Activated T-helper 1 cell treated with anti-CD3 and anti-CD28 coated beads, Interleukin-12 subunit alpha, Interleukin-12 subunit beta, Interleukin-2, Interleukin-4 antibody, amounts not matched to agents 30 ng/mL and 10 ng/mL and 1 ng/mL, durations not matched to agents 14 hours and 24 hours and 36 hours (primary cell): ENCODE measurements at regions of chr10 and their contacts with region 1.

Region 1: GRCh38 chr10:102904346-102904745 is 13.7 kb upstream of the CNNM2 start:
- DNase-seq: no peak
- H3K4me3 Mint-ChIP-seq: no peak overlapping the region
- H3K27ac Mint-ChIP-seq: no peak overlapping the region
- H3K4me1 Mint-ChIP-seq: no peaks in the 10 kb centered on the region
- H3K27me3 Mint-ChIP-seq: peaks cover 2% of the 10 kb centered on the region

Region 2: DNA sequence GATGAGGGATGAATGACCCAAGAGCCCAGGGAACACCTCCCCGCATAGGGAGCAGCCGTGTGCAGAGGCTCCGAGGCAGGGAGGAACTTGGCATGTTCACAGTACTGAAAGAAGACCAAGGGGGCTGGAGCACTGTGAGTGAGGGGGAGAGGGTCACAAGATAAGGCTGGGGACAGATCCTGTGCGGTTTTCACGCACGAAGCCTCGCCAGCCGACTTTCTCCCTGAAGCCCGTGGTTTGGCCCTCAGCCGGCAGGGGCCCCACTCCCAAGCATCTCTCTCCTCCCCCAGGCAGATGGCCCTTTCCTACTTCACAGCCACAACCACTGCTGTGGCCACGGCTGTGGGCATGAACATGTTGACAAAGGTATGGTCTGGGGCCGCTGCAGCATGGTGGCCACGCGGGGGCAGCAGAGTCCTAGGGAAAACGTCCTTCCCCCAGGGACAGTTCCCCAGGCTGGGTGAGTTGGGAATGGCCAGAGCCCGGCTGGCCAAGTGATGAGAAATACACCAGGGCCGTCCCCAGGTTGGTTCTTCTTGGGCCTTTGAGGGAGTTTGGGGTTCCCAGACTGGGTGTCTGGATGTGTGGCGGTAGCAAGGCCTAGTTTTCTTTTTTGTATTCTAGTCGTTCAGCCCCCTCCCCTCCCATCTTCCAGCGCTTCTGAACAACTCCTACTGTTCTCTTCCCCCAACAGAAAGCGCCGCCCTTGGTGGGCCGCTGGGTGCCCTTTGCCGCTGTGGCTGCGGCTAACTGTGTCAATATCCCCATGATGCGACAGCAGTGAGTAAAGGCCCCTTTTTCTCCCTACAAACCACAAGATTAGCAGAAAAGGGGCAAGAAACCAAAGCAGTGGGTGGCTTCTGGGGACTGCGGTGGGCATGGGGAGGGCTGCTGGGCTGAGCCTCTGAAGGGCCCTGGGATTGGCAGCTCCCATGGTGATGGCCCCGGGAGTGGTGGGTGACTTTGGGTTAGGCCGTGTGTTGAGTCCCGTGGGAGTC is 175.0 kb before region 1 on chr10:
- intact Hi-C with region 1: loop called (anchors 1 kb)
- DNase-seq: peak; percentile 41
- H3K4me3 Mint-ChIP-seq: no peak overlapping the region
- H3K27ac Mint-ChIP-seq: no peak overlapping the region
- H3K4me1 Mint-ChIP-seq: peaks cover 10% of the 10 kb centered on the region
- H3K27me3 Mint-ChIP-seq: no peaks in the 10 kb centered on the region